ENCODE measurements at regions of chr12 and their contacts with region 1.

Region 1: GRCh38 chr12:131104463-131105350 is 151.0 kb downstream of the ADGRD1 start:
- DNase-seq: peak; percentile 72
- H3K4me3 Mint-ChIP-seq: no peak overlapping the region
- H3K27ac Mint-ChIP-seq: no peak overlapping the region
- H3K4me1 Mint-ChIP-seq: no peaks in the 10 kb centered on the region
- H3K27me3 Mint-ChIP-seq: no peaks in the 10 kb centered on the region
- CTCF ChIP-seq: peak; percentile 97

Region 2: DNA sequence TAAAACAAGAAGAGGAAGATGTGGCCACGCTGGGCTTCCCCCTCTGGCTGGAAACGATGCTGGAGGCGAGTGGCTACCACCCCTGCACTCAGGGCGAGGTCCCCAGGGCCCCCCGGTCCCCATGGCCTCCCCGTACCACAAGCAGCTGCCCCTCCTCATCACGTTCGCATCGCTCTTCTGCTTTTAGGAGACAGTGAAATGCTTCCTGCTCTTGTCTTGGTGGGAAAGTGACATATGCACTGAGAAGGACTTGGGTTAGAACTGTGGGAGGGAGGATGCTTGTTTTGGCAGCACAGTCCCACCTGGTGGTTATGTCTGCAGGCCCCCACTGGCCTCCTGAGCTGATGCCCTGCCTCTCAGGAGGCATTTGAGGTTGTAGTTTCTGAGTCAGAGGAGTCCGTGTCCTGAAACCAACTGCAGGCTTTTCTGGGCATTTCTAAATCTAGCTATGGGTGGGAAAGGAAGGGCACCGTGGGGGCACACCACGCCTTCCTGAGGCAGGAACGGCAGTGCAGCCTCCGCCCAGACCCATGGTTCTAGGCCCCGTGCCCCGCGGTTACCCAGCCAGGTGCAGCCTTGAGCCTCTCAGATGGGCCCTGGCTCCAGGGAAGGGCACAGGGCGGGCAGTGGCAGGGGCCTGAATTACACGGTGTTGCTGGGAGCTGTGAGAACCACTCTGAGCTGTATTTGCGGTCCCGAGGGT is 11.7 kb before region 1 on chr12:
- CTCF ChIA-PET with region 1: interaction called, 13 read pairs
- POLR2A ChIA-PET with region 1: no interaction called
- intact Hi-C with region 1: no loop called
- DNase-seq: peak; percentile 78
- H3K4me3 Mint-ChIP-seq: no peak overlapping the region
- H3K27ac Mint-ChIP-seq: no peak overlapping the region
- H3K4me1 Mint-ChIP-seq: peaks cover 11% of the 10 kb centered on the region
- H3K27me3 Mint-ChIP-seq: peaks cover 22% of the 10 kb centered on the region
- CTCF ChIP-seq: no peak

Region 3: GRCh38 chr12:131132118-131132892 is 27.6 kb after region 1 on chr12:
- CTCF ChIA-PET with region 1: interaction called, 76 read pairs
- POLR2A ChIA-PET with region 1: no interaction called
- intact Hi-C with region 1: loop called (anchors 1 kb)
- DNase-seq: peak; percentile 63
- H3K4me3 Mint-ChIP-seq: no peak overlapping the region
- H3K27ac Mint-ChIP-seq: no peak overlapping the region
- H3K4me1 Mint-ChIP-seq: peaks cover 18% of the 10 kb centered on the region
- H3K27me3 Mint-ChIP-seq: peaks cover 2% of the 10 kb centered on the region
- CTCF ChIP-seq: peak; percentile 75

Region 4: DNA sequence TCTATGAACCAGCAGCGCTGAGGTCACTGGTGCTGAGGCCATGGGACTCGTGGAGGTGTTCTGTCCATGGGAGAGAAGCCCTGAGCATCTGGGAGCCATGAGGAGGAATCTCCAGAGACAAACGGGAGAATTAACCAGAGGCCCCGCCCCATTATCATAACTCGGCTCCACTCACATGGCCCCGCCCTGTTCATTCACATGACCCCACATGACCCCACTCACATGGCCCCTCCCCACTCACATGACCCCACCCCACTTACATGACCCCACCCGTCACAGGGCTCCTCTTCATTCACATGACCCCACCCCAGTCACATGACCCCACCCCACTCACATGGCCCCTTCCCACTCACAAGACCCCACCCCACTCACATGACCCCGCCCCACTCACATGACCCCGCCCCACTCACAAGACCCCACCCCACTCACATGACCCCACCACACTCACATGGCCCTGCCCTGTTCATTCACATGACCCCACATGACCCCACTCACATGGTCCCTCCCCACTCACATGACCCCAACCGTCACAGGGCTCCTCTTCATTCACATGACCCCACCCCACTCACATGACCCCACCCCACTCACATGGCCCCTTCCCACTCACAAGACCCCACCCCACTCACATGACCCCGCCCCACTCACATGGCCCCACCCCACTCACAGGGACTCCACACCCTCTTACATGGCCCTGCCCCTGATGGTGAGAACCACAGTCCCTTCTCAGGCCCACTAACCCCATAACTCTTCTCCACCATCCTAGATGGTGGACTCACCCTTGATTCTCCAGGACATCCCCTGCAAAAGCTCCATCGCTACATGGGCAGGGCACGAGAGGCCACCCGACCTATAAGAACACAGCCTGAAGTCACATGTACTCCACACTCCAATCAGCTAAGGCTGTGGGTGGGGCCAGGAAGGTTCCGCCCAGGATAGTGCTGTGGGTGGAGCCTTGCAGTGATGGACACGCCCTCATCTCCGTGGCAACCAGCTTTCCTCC is 455.1 kb after region 1 on chr12:
- CTCF ChIA-PET with region 1: interaction called, 8 read pairs
- POLR2A ChIA-PET with region 1: no interaction called
- intact Hi-C with region 1: loop called (anchors 10 kb)
- DNase-seq: no peak
- H3K4me3 Mint-ChIP-seq: no peak overlapping the region
- H3K27ac Mint-ChIP-seq: no peak overlapping the region
- H3K4me1 Mint-ChIP-seq: no peaks in the 10 kb centered on the region
- H3K27me3 Mint-ChIP-seq: peaks cover under 1% of the 10 kb centered on the region
- CTCF ChIP-seq: no peak

Region 5: DNA sequence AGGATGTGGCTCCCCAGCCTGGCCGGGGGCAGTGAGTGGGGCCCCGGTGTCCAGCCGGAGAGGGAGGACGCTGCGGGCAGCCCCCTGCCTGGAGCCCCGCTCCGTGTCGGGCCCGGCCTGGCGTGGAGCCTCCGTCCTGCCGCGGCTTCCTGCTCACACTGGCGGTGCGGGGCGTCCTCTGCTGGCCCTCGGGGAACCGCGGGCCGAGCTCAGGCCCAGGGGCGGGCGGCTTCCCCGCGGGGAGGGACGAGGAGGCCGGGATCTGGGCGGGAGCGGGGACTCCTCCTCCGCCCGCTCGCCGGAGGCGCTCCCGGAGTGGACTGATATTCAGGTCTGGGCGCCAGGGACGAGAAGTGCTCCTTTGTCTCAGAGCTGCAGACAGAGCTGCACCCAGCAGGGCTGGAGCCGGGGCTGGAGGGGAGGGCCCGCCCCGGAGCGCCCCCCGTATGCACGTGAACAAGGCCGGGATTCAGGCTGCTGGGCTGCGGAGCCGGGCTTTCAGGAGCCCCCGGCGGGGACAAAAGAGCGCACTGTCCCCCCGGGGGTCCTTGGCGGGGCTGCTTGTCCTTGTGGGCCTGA is 725.7 kb after region 1 on chr12:
- CTCF ChIA-PET with region 1: interaction called, 8 read pairs
- POLR2A ChIA-PET with region 1: interaction called, 4 read pairs
- intact Hi-C with region 1: loop called (anchors 2 kb)
- DNase-seq: peak; percentile 80
- H3K4me3 Mint-ChIP-seq: peak overlapping the region; percentile 67
- H3K27ac Mint-ChIP-seq: no peak overlapping the region
- H3K4me1 Mint-ChIP-seq: peaks cover 5% of the 10 kb centered on the region
- H3K27me3 Mint-ChIP-seq: no peaks in the 10 kb centered on the region
- CTCF ChIP-seq: peak; percentile 83